ENCODE measurements at regions of chr7 and their contacts with region 1.

Region 1: DNA sequence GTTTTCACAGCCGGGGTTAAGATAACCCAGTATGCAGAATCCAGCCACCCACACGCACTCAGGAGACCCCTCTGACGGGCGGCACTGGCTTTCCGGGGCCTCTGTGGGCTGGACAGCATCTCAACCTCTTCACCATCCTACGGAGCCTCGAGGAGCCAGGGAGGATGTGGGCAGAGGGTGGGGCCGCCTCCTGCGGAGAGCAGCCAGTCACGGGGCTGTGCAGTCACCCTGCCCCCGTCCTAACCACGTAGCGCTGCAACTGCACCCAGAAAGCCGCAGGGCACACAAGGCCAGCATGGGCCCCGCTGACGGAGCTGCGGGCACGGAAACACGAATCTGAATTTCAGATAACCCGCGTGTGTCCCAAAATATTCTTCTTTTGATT is 270.3 kb downstream of the ELFN1 start:
- DNase-seq: peak; percentile 51 to 74
- ATAC-seq: peak in 7 of 8 donors; percentile 60 to 83 (median 69)
- H3K4me3 ChIP-seq: peak overlapping the region in 5 of 10 donors; percentile 1 to 56 (median 20)
- H3K27ac ChIP-seq: peak overlapping the region in 5 of 10 donors; percentile 6 to 91 (median 54)
- H3K4me1 ChIP-seq: peaks cover 2 to 54% (median 20%) of the 10 kb centered on the region in 9 donors
- H3K27me3 ChIP-seq: no peaks in the 10 kb centered on the region
- CTCF ChIP-seq: no peak

Region 2: DNA sequence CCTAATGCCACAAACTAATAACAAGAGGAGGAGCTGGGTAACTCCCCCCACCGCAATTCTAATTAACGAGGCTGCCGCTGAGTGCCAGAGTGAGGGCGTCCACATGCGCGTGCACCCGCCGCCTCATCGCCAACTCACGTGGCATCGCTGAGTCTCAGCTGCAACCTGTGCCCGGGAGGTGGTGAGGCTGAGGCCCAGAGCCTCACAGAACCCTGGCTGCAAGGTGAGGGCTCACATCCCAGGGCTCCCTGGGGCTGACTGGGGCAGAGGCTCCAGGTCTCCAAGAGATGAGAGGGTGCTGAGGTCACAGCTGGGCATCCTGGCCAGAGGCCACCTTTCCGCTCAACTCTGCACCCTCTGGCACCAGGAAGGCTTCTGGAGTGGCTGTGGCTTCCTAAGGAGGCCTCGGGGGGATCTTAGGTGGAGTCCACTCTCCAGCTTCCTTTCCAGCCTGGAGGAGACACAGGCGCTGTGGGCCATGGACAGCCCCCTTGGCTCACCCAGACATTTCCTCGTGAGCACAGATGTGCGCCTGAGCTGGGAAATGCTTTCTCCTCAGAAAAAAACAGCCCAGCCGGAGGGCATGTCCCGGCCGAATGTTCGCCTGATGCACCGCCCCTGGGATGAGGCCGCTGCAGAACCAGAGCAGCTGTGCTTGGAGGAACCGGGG is 49.7 kb after region 1 on chr7:
- intact Hi-C with region 1: loop called in 1 of 10 experiments (anchors 5 kb)
- DNase-seq: peak; percentile 27 to 32
- ATAC-seq: peak; percentile 41 to 89 (median 82)
- H3K4me3 ChIP-seq: no peak overlapping the region
- H3K27ac ChIP-seq: peak overlapping the region in 1 of 10 donors; percentile 33
- H3K4me1 ChIP-seq: peaks cover 5 to 29% (median 12%) of the 10 kb centered on the region in 9 donors
- H3K27me3 ChIP-seq: no peaks in the 10 kb centered on the region
- CTCF ChIP-seq: no peak

Region 3: DNA sequence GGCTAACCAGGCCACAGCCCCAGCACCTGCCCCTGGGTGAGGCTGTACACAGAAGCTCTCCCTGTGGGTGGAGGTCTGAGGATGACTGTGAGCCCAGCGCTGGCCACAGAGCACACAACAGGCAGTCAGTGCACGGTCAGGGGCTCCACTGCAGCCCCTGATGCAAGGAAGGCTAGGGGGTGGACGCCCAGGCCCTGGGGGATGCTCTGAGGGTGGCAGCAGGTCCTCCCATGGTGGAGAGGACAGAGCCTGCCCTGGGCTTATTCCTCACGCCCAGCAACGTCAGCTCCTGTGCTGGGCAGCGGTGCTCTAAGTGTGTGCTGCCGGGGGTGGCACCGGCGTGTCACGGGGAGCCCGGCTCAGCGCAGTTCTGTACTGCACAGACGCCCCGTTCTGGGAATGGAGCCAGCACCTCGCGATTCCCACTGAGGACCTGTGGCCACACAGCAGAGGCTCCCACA is 69.2 kb after region 1 on chr7:
- intact Hi-C with region 1: loop called in 1 of 10 experiments (anchors 10 kb)
- DNase-seq: peak; percentile 48 to 72
- ATAC-seq: peak; percentile 62 to 88 (median 84)
- H3K4me3 ChIP-seq: no peak overlapping the region
- H3K27ac ChIP-seq: peak overlapping the region; percentile 74 to 94 (median 84)
- H3K4me1 ChIP-seq: peaks cover 0 to 36% (median 18%) of the 10 kb centered on the region in 9 donors
- H3K27me3 ChIP-seq: no peaks in the 10 kb centered on the region
- CTCF ChIP-seq: no peak

Region 4: GRCh38 chr7:2037808-2038522 is 97.6 kb after region 1 on chr7:
- intact Hi-C with region 1: no loop called
- DNase-seq: peak; percentile 45 to 50
- ATAC-seq: peak; percentile 39 to 78 (median 50)
- H3K4me3 ChIP-seq: peak overlapping the region in 8 of 10 donors; percentile 11 to 47 (median 40)
- H3K27ac ChIP-seq: peak overlapping the region in 6 of 10 donors; percentile 10 to 69 (median 51)
- H3K4me1 ChIP-seq: peaks cover 0 to 24% (median 17%) of the 10 kb centered on the region in 9 donors
- H3K27me3 ChIP-seq: no peaks in the 10 kb centered on the region
- CTCF ChIP-seq: no peak

Region 5: DNA sequence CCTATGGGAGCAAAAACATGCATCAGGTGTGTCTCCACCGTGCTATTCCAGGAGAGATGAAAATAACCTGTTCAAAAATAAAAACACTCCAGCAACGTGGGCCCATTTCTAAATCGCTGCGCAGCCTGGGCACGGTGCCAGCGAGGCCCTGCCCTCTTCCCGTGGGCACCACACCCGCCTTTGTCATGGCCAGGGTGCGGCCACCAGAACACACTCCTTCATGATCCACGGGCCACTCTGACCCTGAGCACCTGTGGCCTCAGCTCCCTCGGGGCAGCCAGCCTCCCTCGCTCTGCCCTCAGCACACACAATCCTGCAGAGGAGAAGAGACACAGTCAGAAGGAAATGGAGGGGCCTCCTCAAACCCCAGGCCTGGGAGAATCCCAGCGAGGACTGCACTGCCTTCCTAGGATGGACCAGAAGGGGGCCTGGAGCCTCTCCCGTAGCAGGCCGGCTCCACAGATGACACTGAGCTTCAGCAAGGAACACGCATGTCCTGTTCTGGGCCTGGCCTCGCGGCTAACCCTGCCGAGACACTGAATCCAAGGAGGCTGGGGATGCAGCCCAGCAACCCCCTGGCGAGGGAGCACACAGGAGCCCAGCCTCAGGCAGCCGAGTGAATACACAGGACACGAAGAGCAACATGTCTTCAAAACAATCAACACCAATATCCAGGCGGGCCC is 123.3 kb after region 1 on chr7:
- intact Hi-C with region 1: loop called in 1 of 10 experiments (anchors 5 kb)
- DNase-seq: peak in 1 of 2 donors; percentile 56
- ATAC-seq: peak in 7 of 8 donors; percentile 49 to 80 (median 63)
- H3K4me3 ChIP-seq: no peak overlapping the region
- H3K27ac ChIP-seq: peak overlapping the region in 6 of 10 donors; percentile 12 to 52 (median 25)
- H3K4me1 ChIP-seq: peaks cover 4 to 31% (median 16%) of the 10 kb centered on the region in 9 donors
- H3K27me3 ChIP-seq: no peaks in the 10 kb centered on the region
- CTCF ChIP-seq: peak in 7 of 9 donors; percentile 3 to 40 (median 29)